Prostate gland (tissue), 2 donors: ENCODE measurements at regions of chr5 and their contacts with region 1.

Region 1: GRCh38 chr5:14440582-14441431 is 140.8 kb upstream of the OTULINL start:
- DNase-seq: no peak
- H3K4me3 ChIP-seq: peak overlapping the region; percentile 17 to 28
- H3K27ac ChIP-seq: peak overlapping the region; percentile 53 to 54
- H3K4me1 ChIP-seq: no peaks in the 10 kb centered on the region
- H3K27me3 ChIP-seq: no peaks in the 10 kb centered on the region
- CTCF ChIP-seq: no peak
- POLR2A ChIP-seq: no peak

Region 2: GRCh38 chr5:14331386-14331781 is 109.4 kb before region 1 on chr5:
- intact Hi-C with region 1: no loop called
- DNase-seq: no peak
- H3K4me3 ChIP-seq: no peak overlapping the region
- H3K27ac ChIP-seq: no peak overlapping the region
- H3K4me1 ChIP-seq: no peaks in the 10 kb centered on the region
- H3K27me3 ChIP-seq: no peaks in the 10 kb centered on the region
- CTCF ChIP-seq: no peak
- POLR2A ChIP-seq: no peak

Region 3: GRCh38 chr5:14405267-14405666 is 35.5 kb before region 1 on chr5:
- intact Hi-C with region 1: loop called (anchors 5 kb)
- DNase-seq: no peak
- H3K4me3 ChIP-seq: no peak overlapping the region
- H3K27ac ChIP-seq: no peak overlapping the region
- H3K4me1 ChIP-seq: no peaks in the 10 kb centered on the region
- H3K27me3 ChIP-seq: no peaks in the 10 kb centered on the region
- CTCF ChIP-seq: no peak
- POLR2A ChIP-seq: no peak